A673 (cell line): ENCODE measurements at regions of chr10 and their contacts with region 1.

Region 1: DNA sequence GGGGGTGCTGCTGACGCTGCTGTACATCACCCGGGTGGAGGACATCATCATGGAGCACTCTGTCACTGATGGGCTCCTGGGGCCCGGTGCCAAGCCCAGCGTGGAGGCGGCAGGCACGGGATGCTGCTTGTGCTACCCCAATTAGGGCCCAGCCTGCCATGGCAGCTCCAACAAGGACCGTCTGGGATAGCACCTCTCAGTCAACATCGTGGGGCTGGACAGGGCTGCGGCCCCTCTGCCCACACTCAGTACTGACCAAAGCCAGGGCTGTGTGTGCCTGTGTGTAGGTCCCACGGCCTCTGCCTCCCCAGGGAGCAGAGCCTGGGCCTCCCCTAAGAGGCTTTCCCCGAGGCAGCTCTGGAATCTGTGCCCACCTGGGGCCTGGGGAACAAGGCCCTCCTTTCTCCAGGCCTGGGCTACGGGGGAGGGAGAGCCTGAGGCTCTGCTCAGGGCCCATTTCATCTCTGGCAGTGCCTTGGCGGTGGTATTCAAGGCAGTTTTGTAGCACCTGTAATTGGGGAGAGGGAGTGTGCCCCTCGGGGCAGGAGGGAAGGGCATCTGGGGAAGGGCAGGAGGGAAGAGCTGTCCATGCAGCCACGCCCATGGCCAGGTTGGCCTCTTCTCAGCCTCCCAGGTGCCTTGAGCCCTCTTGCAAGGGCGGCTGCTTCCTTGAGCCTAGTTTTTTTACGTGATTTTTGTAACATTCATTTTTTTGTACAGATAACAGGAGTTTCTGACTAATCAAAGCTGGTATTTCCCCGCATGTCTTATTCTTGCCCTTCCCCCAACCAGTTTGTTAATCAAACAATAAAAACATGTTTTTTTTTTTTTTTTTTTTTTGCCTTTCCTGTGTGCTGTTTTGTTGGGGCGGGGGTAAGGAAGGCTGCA is 55.8 kb downstream of the TSPAN15 start:
- DNase-seq: no peak
- H3K4me3 ChIP-seq: peak overlapping the region; percentile 29
- H3K27ac ChIP-seq: no peak overlapping the region
- H3K4me1 ChIP-seq: no peaks in the 10 kb centered on the region
- H3K27me3 ChIP-seq: peaks cover 8% of the 10 kb centered on the region
- CTCF ChIP-seq: no peak

Region 2: GRCh38 chr10:69262292-69262751 is 244.8 kb before region 1 on chr10:
- CTCF ChIA-PET with region 1: no interaction called
- POLR2A ChIA-PET with region 1: no interaction called
- intact Hi-C with region 1: no loop called
- DNase-seq: no peak
- H3K4me3 ChIP-seq: no peak overlapping the region
- H3K27ac ChIP-seq: no peak overlapping the region
- H3K4me1 ChIP-seq: no peaks in the 10 kb centered on the region
- H3K27me3 ChIP-seq: no peaks in the 10 kb centered on the region
- CTCF ChIP-seq: no peak

Region 3: GRCh38 chr10:69425511-69426298 is 81.4 kb before region 1 on chr10:
- CTCF ChIA-PET with region 1: no interaction called
- POLR2A ChIA-PET with region 1: no interaction called
- intact Hi-C with region 1: loop called (anchors 1 kb)
- DNase-seq: no peak
- H3K4me3 ChIP-seq: no peak overlapping the region
- H3K27ac ChIP-seq: no peak overlapping the region
- H3K4me1 ChIP-seq: no peaks in the 10 kb centered on the region
- H3K27me3 ChIP-seq: no peaks in the 10 kb centered on the region
- CTCF ChIP-seq: no peak

Region 4: GRCh38 chr10:69657430-69657829 is 150.4 kb after region 1 on chr10:
- CTCF ChIA-PET with region 1: no interaction called
- POLR2A ChIA-PET with region 1: no interaction called
- intact Hi-C with region 1: no loop called
- DNase-seq: no peak
- H3K4me3 ChIP-seq: no peak overlapping the region
- H3K27ac ChIP-seq: no peak overlapping the region
- H3K4me1 ChIP-seq: no peaks in the 10 kb centered on the region
- H3K27me3 ChIP-seq: peaks cover 6% of the 10 kb centered on the region
- CTCF ChIP-seq: no peak

Region 5: DNA sequence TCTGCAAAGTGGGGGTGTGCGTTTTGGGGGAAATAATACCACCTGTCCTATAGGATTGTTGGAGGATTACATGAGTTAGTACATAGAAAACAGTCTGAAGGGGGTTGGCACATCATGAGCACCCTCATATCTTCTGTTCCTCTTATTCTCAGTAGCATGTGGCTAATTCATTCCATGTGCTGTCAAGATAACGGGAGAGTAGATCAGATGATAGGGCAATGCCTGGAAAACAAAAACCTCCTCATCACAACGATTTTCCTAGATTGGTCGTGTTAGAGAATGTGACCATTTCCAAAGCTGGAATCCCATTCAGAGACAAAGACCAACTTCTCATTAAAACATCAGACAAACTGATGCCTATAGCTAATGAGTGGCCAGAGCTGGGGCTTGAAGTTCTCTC is 173.5 kb after region 1 on chr10:
- CTCF ChIA-PET with region 1: interaction called, 11 read pairs
- POLR2A ChIA-PET with region 1: no interaction called
- intact Hi-C with region 1: no loop called
- DNase-seq: no peak
- H3K4me3 ChIP-seq: no peak overlapping the region
- H3K27ac ChIP-seq: no peak overlapping the region
- H3K4me1 ChIP-seq: no peaks in the 10 kb centered on the region
- H3K27me3 ChIP-seq: peaks cover 64% of the 10 kb centered on the region
- CTCF ChIP-seq: no peak